WTC11 (cell line): ENCODE measurements at regions of chr5 and their contacts with region 1.

Region 1: GRCh38 chr5:39080597-39081204 is 6.5 kb upstream of the RICTOR start:
- DNase-seq: peak; percentile 49
- ATAC-seq: peak; percentile 91
- H3K4me3 Mint-ChIP-seq: no peak overlapping the region
- H3K27ac Mint-ChIP-seq: 0 out of 2 replicates have a peak overlapping the region, but pooled peaks have one; percentile 82
- H3K4me1 Mint-ChIP-seq: peaks cover 22% of the 10 kb centered on the region
- H3K27me3 Mint-ChIP-seq: no peaks in the 10 kb centered on the region
- CTCF ChIP-seq: peak; percentile 84

Region 2: DNA sequence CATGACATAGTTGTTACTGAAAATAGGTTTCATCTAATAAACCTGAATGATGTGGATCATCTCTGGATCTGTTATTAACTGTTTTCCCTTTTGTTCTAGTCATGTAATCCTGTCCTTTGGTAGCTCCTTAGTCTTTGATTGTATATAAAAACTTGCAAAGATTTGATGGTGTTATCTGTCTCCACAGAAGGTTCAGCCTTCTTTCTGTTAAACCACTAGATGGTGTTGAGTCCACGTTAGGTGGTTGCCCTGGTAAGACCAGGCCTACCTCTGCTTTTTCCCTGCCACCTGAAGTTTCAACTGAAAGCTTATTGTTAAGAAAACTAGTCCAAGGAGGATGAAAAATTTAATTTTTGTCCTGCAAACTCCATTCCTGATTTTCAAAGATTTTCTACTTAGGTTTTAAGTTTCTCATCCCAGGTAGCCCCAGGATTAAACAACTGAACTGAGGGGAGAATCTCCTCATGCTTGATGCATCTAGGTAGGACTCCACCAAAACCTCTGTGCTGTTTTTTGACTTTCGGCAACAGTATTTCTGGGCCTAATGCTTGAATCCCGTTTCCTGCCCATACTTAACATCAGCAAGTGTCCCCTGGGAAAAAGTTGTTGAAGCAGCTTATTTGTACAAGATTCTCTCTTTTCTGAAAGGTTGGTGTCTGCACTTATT is 75.0 kb before region 1 on chr5:
- CTCF ChIA-PET with region 1: interaction called, 29 read pairs
- POLR2A ChIA-PET with region 1: interaction called, 3 read pairs
- DNase-seq: no peak
- ATAC-seq: peak; percentile 82
- H3K4me3 Mint-ChIP-seq: no peak overlapping the region
- H3K27ac Mint-ChIP-seq: peak overlapping the region; percentile 66
- H3K4me1 Mint-ChIP-seq: peaks cover 12% of the 10 kb centered on the region
- H3K27me3 Mint-ChIP-seq: no peaks in the 10 kb centered on the region
- CTCF ChIP-seq: no peak; the same call in 1 of the 2 replicates

Region 3: DNA sequence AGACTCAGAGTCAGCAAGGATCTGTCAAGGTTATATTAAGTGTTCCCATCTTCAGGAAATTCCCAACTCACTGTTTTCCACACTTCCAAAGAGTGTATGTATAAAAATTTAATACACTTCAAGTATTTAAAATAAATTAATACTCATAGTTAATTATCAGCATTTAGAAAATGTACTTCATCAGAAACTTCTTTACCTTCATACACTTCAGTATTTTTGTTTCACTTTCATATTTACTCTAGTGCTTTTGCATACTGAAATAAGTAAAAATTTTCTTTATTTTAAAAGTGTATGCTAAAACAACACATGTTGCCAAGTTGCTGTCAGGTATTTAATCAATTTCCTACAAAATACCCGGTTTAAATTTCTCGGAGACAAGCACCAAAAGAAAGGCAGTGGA is 23.0 kb before region 1 on chr5:
- CTCF ChIA-PET with region 1: no interaction called
- POLR2A ChIA-PET with region 1: no interaction called
- DNase-seq: no peak
- ATAC-seq: no peak
- H3K4me3 Mint-ChIP-seq: no peak overlapping the region
- H3K27ac Mint-ChIP-seq: no peak overlapping the region
- H3K4me1 Mint-ChIP-seq: peaks cover 33% of the 10 kb centered on the region
- H3K27me3 Mint-ChIP-seq: no peaks in the 10 kb centered on the region
- CTCF ChIP-seq: no peak

Region 4: DNA sequence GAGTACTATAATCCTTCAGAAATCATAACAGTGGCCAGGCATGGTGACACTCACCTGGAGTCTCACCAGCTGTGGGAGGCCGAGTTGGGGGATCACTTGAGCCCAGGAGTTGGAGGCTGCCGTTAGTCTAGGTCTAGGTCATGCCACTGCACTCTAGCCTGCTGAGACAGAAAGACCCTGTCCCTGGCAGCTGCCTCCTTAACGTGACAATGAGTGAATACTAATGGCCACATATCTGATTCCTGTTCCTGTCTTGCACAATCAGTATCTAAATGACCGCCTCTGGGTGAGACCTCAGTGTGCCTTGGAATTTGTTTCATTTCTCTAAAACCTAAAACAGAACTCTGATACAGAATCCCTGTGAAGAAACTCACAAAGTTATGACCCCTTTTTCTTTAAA is 475.1 kb after region 1 on chr5:
- CTCF ChIA-PET with region 1: no interaction called
- POLR2A ChIA-PET with region 1: no interaction called
- DNase-seq: no peak
- ATAC-seq: no peak
- H3K4me3 Mint-ChIP-seq: no peak overlapping the region
- H3K27ac Mint-ChIP-seq: no peak overlapping the region
- H3K4me1 Mint-ChIP-seq: no peaks in the 10 kb centered on the region
- H3K27me3 Mint-ChIP-seq: no peaks in the 10 kb centered on the region
- CTCF ChIP-seq: no peak